A549 (cell line): ENCODE measurements at regions of chr1 and their contacts with region 1.

Region 1: GRCh38 chr1:17070163-17070525 is 16.3 kb upstream of the SDHB start:
- DNase-seq: no peak
- ATAC-seq: no peak
- H3K4me3 ChIP-seq: no peak overlapping the region
- H3K27ac ChIP-seq: no peak overlapping the region
- H3K4me1 ChIP-seq: no peaks in the 10 kb centered on the region
- CTCF ChIP-seq: no peak
- EP300 ChIP-seq: no peak
- POLR2A ChIP-seq: no peak
- RAD21 ChIP-seq: no peak

Region 2: GRCh38 chr1:17059739-17060460 is 10.2 kb before region 1 on chr1:
- CTCF ChIA-PET with region 1: interaction called, 15 read pairs
- POLR2A ChIA-PET with region 1: no interaction called
- DNase-seq: peak; percentile 72 to 73
- ATAC-seq: peak; percentile 99
- H3K4me3 ChIP-seq: no peak overlapping the region
- H3K27ac ChIP-seq: peak overlapping the region in 1 of 2 experiments; percentile 14; a peak in 1 of 6 replicates
- H3K4me1 ChIP-seq: no peaks in the 10 kb centered on the region
- CTCF ChIP-seq: peak; percentile 74
- EP300 ChIP-seq: no peak
- POLR2A ChIP-seq: no peak
- RAD21 ChIP-seq: peak; percentile 88 to 91